Activated T-helper 2 cell treated with anti-CD3 and anti-CD28 coated beads, Interferon-gamma antibody, Interleukin-2, Interleukin-4, amounts not matched to agents 10 μg/mL and 5 μg/mL and 100 μg/mL, durations not matched to agents 14 hours and 24 hours and 36 hours (primary cell): ENCODE measurements at regions of chr15 and their contacts with region 1.

Region 1: DNA sequence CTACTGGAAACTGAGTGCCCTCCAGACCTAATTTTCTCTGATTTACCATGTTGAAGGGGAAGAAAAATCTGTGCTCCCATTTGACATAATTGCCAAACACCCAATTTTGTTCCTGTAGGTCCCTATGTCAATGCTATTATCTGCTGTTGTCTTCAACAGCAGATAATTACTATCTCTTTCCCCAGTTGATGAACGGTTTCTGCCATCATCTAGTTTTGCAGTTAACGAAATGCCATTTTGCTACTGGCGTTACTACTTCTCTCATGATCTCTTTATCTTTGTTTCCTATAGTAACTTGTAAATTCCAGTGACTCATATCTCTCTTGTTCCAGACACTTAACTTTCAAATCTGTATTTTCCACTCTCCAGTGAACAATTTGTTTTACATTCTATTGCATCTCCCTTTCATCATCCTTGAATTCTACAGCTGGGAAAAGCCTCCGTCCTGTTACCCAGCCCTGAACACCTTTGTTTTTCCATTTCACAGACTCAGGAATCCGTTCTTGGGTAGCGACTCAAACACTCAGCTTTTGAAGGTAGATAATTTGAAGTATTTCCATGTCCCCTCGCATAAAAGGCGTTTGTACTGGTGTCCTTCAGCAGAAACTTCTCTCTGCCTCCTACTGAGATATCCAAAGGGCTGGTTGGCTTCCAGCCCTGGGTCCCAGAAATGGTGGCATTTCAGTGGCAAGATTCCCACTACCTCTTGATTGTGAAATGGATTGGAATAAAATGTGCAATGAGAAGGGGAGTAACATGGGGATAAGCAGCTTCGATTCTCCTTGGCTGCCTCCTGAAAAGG is 111.7 kb downstream of the FOXB1 start:
- DNase-seq: no peak
- H3K4me3 Mint-ChIP-seq: no peak overlapping the region
- H3K27ac Mint-ChIP-seq: peak overlapping the region; percentile 83
- H3K4me1 Mint-ChIP-seq: peaks cover 53% of the 10 kb centered on the region
- H3K27me3 Mint-ChIP-seq: no peaks in the 10 kb centered on the region

Region 2: GRCh38 chr15:60096157-60096556 is 19.6 kb before region 1 on chr15:
- intact Hi-C with region 1: no loop called
- DNase-seq: no peak
- H3K4me3 Mint-ChIP-seq: no peak overlapping the region
- H3K27ac Mint-ChIP-seq: no peak overlapping the region
- H3K4me1 Mint-ChIP-seq: peaks cover 6% of the 10 kb centered on the region
- H3K27me3 Mint-ChIP-seq: peaks cover 9% of the 10 kb centered on the region

Region 3: DNA sequence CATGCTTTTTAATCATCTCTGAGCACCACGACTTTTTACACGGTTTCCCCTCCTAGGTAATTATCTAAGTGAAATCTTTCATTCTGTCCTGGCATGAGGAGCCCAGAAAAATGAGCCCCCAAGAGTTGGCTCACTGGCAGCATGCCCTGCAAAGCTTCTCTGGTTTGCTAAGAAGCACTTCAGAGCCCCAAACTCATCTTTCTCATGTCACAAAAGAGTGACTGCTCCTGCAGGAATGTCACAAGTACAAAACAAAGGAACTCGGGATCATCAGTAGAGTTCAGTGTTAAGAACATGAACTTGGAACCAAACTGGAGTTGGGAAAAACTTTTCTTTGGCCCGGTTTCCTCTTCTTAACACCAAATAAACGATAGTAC is 12.2 kb after region 1 on chr15:
- intact Hi-C with region 1: loop called (anchors 2 kb)
- DNase-seq: no peak
- H3K4me3 Mint-ChIP-seq: peak overlapping the region; percentile 71
- H3K27ac Mint-ChIP-seq: peak overlapping the region; percentile 86
- H3K4me1 Mint-ChIP-seq: peaks cover 53% of the 10 kb centered on the region
- H3K27me3 Mint-ChIP-seq: peaks cover 9% of the 10 kb centered on the region

Region 4: DNA sequence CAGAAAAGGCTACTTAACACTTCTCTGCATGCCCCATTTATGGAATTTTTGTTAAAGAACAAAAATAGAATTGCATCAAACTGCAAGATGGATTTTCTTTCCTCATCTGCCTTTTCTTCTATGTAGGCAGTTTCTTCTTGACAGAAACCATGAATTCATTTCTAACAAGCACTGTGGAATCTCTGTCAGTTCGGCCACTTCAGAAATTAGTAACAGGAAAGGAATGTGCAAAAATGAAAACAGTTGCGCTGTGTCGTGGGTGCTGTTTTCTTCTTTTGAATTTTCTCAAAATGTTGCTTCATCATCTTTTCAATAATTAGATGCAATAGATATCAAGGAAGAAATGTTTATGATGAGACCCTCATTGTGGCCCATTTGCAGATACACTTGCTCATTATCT is 39.9 kb after region 1 on chr15:
- intact Hi-C with region 1: loop called (anchors 5 kb)
- DNase-seq: no peak
- H3K4me3 Mint-ChIP-seq: peak overlapping the region; percentile 20
- H3K27ac Mint-ChIP-seq: peak overlapping the region; percentile 16
- H3K4me1 Mint-ChIP-seq: peaks cover 29% of the 10 kb centered on the region
- H3K27me3 Mint-ChIP-seq: peaks cover 5% of the 10 kb centered on the region